ENCODE measurements at regions of chr13 and their contacts with region 1.

Region 1: GRCh38 chr13:42258747-42259146 is 13.2 kb upstream of the AKAP11 start:
- DNase-seq: no peak
- H3K4me3 ChIP-seq: no peak overlapping the region
- H3K27ac ChIP-seq: no peak overlapping the region
- H3K4me1 ChIP-seq: no peaks in the 10 kb centered on the region
- CTCF ChIP-seq: no peak

Region 2: GRCh38 chr13:41900918-41901317 is 357.8 kb before region 1 on chr13:
- CTCF ChIA-PET with region 1: no interaction called
- POLR2A ChIA-PET with region 1: no interaction called
- intact Hi-C with region 1: no loop called
- DNase-seq: no peak
- H3K4me3 ChIP-seq: no peak overlapping the region
- H3K27ac ChIP-seq: no peak overlapping the region
- H3K4me1 ChIP-seq: no peaks in the 10 kb centered on the region
- CTCF ChIP-seq: no peak

Region 3: GRCh38 chr13:42247883-42248282 is 10.9 kb before region 1 on chr13:
- CTCF ChIA-PET with region 1: no interaction called
- POLR2A ChIA-PET with region 1: interaction called, 12 read pairs
- intact Hi-C with region 1: no loop called
- DNase-seq: no peak
- H3K4me3 ChIP-seq: no peak overlapping the region
- H3K27ac ChIP-seq: no peak overlapping the region
- H3K4me1 ChIP-seq: no peaks in the 10 kb centered on the region
- CTCF ChIP-seq: no peak

Measured in OCI-LY7 (cell line).